Psoas muscle (tissue), 8 donors: ENCODE measurements at regions of chr1 and their contacts with region 1.

Region 1: DNA sequence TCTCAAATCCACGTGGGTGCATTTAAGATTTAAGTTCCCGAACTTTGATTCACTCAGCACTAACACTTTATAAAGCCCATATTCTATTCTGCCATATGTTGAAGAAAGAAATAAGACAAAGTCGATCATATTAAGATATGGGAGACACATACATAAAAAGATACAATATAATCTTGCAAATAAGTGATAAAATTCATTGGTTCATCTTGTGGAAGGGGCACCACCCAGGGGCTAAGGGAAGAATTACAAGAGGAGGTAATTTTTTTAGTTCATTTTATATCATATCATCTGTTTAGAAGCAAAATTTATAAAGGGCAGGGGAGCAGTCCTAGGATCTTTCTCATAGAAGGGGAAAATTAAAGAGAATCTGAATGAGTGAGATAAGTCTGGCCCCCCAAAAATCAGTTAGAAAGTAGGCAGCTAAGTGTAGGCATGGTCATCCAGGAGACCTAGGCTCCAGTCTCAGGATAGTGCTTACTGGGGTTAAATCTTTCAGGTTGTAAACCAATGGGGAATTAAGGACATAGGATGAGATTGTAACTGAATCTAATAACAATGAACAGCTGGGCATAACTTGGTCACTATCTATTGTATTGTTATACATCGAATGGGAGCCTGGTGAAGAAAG is 124.2 kb upstream of the L1TD1 start:
- DNase-seq: no peak
- ATAC-seq: peak in 1 of 4 donors; percentile 52
- H3K4me3 ChIP-seq: no peak overlapping the region
- H3K27ac ChIP-seq: peak overlapping the region; percentile 94
- H3K4me1 ChIP-seq: peaks cover 28% of the 10 kb centered on the region
- H3K27me3 ChIP-seq: no peaks in the 10 kb centered on the region
- CTCF ChIP-seq: peak; percentile 69

Region 2: DNA sequence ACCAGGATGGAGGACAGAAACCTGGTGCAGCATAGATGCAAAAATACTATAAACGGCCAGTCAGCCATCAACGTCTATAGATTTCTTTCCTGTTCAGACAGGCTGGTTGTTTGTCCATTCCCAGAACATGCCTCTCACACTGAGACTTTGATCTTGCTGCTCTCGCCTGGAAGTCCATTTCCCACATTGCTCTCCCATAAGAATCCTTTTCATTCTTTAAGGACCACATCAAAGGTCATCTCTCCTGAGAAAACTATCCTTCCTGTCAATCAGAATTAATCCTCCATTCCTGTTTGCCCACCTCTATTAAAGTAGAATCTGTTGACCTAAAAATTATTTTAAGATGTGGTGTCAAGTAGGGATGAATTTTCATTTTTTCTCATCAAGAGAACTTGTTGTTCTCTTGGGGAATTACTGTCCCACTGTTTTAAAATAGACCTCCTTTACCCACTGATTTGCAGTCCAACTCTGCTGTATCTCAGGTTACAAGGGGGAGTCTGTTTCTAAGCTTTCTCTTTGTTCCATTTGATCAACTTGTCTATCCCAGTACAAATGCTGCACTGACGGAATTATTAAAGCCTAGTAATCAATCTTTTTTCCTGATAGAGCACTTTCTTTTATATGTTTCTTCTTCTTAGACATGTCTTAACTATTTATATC is 155.5 kb before region 1 on chr1:
- intact Hi-C with region 1: loop called (anchors 5 to 10 kb)
- DNase-seq: no peak
- ATAC-seq: peak in 3 of 4 donors; percentile 34 to 74 (median 48)
- H3K4me3 ChIP-seq: no peak overlapping the region
- H3K27ac ChIP-seq: peak overlapping the region; percentile 56
- H3K4me1 ChIP-seq: peaks cover 18% of the 10 kb centered on the region
- H3K27me3 ChIP-seq: no peaks in the 10 kb centered on the region
- CTCF ChIP-seq: no peak

Region 3: GRCh38 chr1:61935516-61935915 is 135.0 kb before region 1 on chr1:
- intact Hi-C with region 1: loop called in 1 of 2 experiments (anchors 5 kb)
- DNase-seq: no peak
- ATAC-seq: no peak
- H3K4me3 ChIP-seq: no peak overlapping the region
- H3K27ac ChIP-seq: no peak overlapping the region
- H3K4me1 ChIP-seq: no peaks in the 10 kb centered on the region
- H3K27me3 ChIP-seq: no peaks in the 10 kb centered on the region
- CTCF ChIP-seq: no peak

Region 4: GRCh38 chr1:61950418-61950817 is 120.1 kb before region 1 on chr1:
- intact Hi-C with region 1: loop called in 1 of 2 experiments (anchors 10 kb)
- DNase-seq: no peak
- ATAC-seq: no peak
- H3K4me3 ChIP-seq: no peak overlapping the region
- H3K27ac ChIP-seq: peak overlapping the region; percentile 59
- H3K4me1 ChIP-seq: peaks cover 20% of the 10 kb centered on the region
- H3K27me3 ChIP-seq: no peaks in the 10 kb centered on the region
- CTCF ChIP-seq: peak; percentile 22

Region 5: DNA sequence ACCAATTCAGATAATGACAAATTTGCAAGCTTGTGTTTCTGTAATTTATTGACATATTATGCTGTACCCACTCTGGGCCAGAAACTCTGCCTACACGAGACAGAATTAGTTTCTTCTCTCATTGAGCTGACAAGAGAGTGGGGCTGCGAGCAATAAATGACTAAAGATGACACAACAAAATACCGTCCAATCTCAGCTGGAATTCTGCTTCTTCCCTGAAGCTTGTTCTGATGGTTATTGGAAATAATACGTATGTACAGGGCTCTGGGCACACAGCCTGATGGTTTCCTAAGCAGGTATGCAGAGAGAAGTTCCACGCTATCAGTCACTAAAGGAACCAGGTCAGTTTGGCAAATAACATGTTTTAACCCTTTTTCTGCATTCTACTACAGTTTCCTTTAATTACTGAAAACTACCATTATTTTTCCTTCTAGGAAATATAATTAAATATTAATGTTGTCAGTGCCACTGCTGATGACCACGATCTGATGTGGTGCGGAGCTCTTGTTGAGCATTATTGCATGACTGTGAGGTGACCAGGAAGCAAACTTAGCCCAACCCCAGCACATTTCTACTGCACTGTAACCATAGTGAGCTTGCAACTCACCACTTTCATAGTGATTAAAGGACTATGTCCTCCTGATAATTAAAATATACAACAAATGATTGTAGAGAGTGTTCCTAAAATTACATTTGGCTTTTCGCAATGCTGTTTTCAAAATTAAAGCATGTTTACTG is 97.2 kb before region 1 on chr1:
- intact Hi-C with region 1: loop called in 1 of 2 experiments (anchors 5 kb)
- DNase-seq: no peak
- ATAC-seq: peak; percentile 66 to 85 (median 84)
- H3K4me3 ChIP-seq: peak overlapping the region; percentile 45
- H3K27ac ChIP-seq: peak overlapping the region; percentile 75
- H3K4me1 ChIP-seq: peaks cover 17% of the 10 kb centered on the region
- H3K27me3 ChIP-seq: no peaks in the 10 kb centered on the region
- CTCF ChIP-seq: no peak